ENCODE measurements at regions of chr11 and their contacts with region 1.

Region 1: DNA sequence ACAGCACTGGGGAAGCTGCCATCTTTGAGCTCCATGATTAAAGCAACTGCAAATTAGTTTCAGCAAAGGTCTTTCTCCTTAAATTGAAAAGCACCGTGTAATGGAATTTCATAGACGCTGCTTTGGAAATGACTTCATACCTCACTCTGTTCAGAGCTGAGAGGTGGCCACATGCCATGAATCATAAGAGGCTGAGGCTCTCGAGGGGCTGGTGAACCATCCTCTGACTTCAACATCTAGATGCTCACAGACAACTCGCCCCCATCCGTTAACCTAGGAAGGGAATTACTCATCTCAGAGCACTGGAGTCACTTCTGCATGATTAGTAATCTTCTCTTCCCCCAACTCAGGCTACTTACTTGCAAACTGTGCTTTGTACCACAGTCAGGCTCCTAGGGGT is 122.3 kb downstream of the RCN1 start:
- DNase-seq: peak; percentile 60
- H3K4me3 Mint-ChIP-seq: no peak overlapping the region
- H3K27ac Mint-ChIP-seq: no peak overlapping the region
- H3K4me1 Mint-ChIP-seq: peaks cover 3% of the 10 kb centered on the region
- H3K27me3 Mint-ChIP-seq: peaks cover 17% of the 10 kb centered on the region

Region 2: GRCh38 chr11:32044158-32044863 is 168.9 kb before region 1 on chr11:
- CTCF ChIA-PET with region 1: no interaction called
- POLR2A ChIA-PET with region 1: no interaction called
- intact Hi-C with region 1: no loop called
- DNase-seq: no peak
- H3K4me3 Mint-ChIP-seq: no peak overlapping the region
- H3K27ac Mint-ChIP-seq: no peak overlapping the region
- H3K4me1 Mint-ChIP-seq: no peaks in the 10 kb centered on the region
- H3K27me3 Mint-ChIP-seq: peaks cover 16% of the 10 kb centered on the region

Region 3: DNA sequence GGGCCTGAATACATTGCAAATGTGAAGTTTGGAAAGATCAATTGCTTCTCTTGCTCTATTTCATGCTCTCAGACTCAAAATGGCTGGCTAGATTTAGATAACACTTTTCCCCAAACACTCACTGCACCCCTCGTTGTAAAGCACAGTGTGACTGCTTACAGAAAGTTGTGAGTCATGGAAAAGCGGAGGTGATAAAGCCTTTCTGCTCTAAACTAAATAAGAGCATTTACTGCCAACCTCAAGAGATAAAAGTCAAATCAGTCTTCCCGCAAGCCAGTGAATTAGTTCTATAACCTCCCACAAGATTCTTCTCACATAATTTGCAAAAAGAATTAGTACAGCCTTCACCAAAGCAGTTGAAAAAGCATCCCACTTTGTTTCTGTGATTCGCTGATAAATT is 53.4 kb after region 1 on chr11:
- CTCF ChIA-PET with region 1: no interaction called
- POLR2A ChIA-PET with region 1: no interaction called
- intact Hi-C with region 1: loop called (anchors 2 kb)
- DNase-seq: no peak
- H3K4me3 Mint-ChIP-seq: no peak overlapping the region
- H3K27ac Mint-ChIP-seq: no peak overlapping the region
- H3K4me1 Mint-ChIP-seq: peaks cover 4% of the 10 kb centered on the region
- H3K27me3 Mint-ChIP-seq: peaks cover 5% of the 10 kb centered on the region